Activated naive CD4-positive, alpha-beta T cell treated with anti-CD3 and anti-CD28 coated beads for 36 hours (primary cell): ENCODE measurements at regions of chr19 and their contacts with region 1.

Region 1: GRCh38 chr19:47483800-47484690 is at the start of gene KPTN:
- DNase-seq: peak; percentile 93
- H3K4me3 Mint-ChIP-seq: peak within 1 kb of the TSS; percentile 99
- H3K27ac Mint-ChIP-seq: peak within 1 kb of the TSS; percentile 98
- H3K4me1 Mint-ChIP-seq: peaks cover 31% of the 10 kb centered on the region
- H3K27me3 Mint-ChIP-seq: no peaks in the 10 kb centered on the region
- total RNA-seq, gene KPTN: 14.2 to 15.5 TPM

Region 2: DNA sequence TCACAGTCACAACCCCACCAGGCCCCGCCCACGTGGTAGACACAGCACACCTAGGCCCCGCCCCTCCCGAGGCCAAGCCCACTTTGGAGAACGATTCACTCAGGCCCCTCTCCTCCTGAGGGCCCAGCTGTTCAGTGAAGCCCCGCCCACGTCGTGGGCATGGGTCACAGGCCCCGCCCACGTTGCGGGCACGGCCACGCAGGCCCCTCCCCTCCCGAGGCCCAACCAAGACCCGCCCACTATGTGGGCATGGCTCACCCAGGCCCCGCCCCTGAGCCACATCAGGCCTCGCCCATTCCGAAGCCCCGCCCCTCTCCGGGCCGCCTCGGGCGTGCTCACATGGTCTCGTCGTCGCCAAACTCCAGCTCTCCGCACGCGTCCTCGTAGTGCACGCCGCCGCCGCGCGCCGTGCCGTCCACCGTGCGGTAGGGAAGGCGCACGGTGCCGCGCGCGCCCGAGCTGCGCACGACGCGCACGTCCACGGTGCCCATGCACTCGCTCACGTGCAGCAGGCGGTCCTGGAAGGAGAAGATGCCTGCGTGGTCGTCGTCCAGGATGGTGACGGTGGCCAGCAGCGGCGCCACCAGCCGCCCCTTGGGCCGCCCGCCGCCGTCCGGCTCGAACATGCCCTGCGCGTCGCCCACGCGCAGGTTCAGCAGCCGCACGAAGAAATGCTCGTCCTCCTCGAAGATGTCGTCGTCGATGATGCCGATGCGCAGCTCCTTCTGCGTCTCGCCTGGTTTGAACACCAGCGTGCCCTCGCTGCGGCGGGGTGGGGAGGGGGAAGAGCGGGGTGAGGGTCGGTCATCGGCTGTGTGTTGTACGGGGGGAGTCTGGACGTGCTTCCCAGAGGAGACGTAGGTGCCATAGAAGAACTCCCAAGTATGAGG is 36.3 kb before region 1 on chr19:
- CTCF ChIA-PET with region 1: no interaction called
- intact Hi-C with region 1: loop called (anchors 2 kb)
- DNase-seq: peak; percentile 76
- H3K4me3 Mint-ChIP-seq: peak overlapping the region; percentile 56
- H3K27ac Mint-ChIP-seq: no peak overlapping the region
- H3K4me1 Mint-ChIP-seq: peaks cover 38% of the 10 kb centered on the region
- H3K27me3 Mint-ChIP-seq: peaks cover 51% of the 10 kb centered on the region

Region 3: GRCh38 chr19:47514869-47515588 is 31.0 kb after region 1 on chr19 and contains the start of gene NAPA:
- CTCF ChIA-PET with region 1: interaction called, 12 read pairs
- intact Hi-C with region 1: loop called (anchors 1 kb)
- DNase-seq: peak; percentile 100
- H3K4me3 Mint-ChIP-seq: peak within 1 kb of the TSS; percentile 98
- H3K27ac Mint-ChIP-seq: peak within 1 kb of the TSS; percentile 97
- H3K4me1 Mint-ChIP-seq: peaks cover 81% of the 10 kb centered on the region
- H3K27me3 Mint-ChIP-seq: no peaks in the 10 kb centered on the region
- total RNA-seq, gene NAPA: 72.5 to 75.1 TPM

Region 4: GRCh38 chr19:47707135-47707925 is 223.3 kb after region 1 on chr19:
- CTCF ChIA-PET with region 1: interaction called, 17 read pairs
- intact Hi-C with region 1: no loop called
- DNase-seq: peak; percentile 89
- H3K4me3 Mint-ChIP-seq: no peak overlapping the region
- H3K27ac Mint-ChIP-seq: no peak overlapping the region
- H3K4me1 Mint-ChIP-seq: peaks cover 4% of the 10 kb centered on the region
- H3K27me3 Mint-ChIP-seq: peaks cover 6% of the 10 kb centered on the region